Mammary epithelial cell (primary cell): ENCODE measurements at regions of chr4 and their contacts with region 1.

Region 1: GRCh38 chr4:180363815-180364214 is 1879.4 kb upstream of the TENM3 start:
- DNase-seq: peak; percentile 18
- H3K4me3 ChIP-seq: no peak overlapping the region
- H3K27ac ChIP-seq: no peak overlapping the region
- H3K4me1 ChIP-seq: no peaks in the 10 kb centered on the region
- H3K27me3 ChIP-seq: no peaks in the 10 kb centered on the region
- CTCF ChIP-seq: no peak

Region 2: GRCh38 chr4:180350901-180351300 is 12.9 kb before region 1 on chr4:
- CTCF ChIA-PET with region 1: no interaction called
- dilution Hi-C with region 1: no loop called
- in situ Hi-C with region 1: no loop called
- intact Hi-C with region 1: loop called (anchors 1 kb)
- DNase-seq: no peak
- H3K4me3 ChIP-seq: no peak overlapping the region
- H3K27ac ChIP-seq: no peak overlapping the region
- H3K4me1 ChIP-seq: no peaks in the 10 kb centered on the region
- H3K27me3 ChIP-seq: peaks cover 2% of the 10 kb centered on the region
- CTCF ChIP-seq: no peak

Region 3: DNA sequence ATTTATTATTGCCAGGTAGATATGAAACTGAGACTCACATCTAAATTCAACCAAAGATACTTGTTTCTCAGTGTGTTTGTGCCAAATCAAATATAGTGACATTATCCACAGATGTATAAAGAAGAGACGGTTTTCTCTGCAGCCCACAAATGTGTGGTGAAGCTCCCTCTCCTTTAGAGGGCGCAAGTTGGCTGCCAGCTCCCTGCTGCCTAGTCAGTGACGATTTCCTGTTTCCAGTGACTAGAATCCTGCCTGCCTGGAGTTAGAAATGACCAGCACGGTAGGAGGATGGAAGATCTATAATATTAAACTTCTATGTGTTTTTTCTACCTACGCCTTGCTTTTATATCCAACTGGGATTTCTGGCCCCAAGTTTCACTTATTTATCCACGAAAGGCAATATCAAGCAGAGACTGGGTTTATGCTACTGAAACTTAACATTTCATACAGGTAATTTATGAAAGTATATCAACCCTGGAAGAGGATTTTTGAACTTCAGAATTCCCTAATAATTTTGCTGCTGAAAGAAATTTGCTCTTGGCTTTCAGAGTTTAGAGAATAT is 85.7 kb after region 1 on chr4:
- CTCF ChIA-PET with region 1: no interaction called
- dilution Hi-C with region 1: no loop called
- in situ Hi-C with region 1: no loop called
- intact Hi-C with region 1: no loop called
- DNase-seq: peak; percentile 54
- H3K4me3 ChIP-seq: peak overlapping the region; percentile 28 to 52 (median 33)
- H3K27ac ChIP-seq: no peak overlapping the region
- H3K4me1 ChIP-seq: no peaks in the 10 kb centered on the region
- H3K27me3 ChIP-seq: no peaks in the 10 kb centered on the region
- CTCF ChIP-seq: peak; percentile 94 to 97

Region 4: DNA sequence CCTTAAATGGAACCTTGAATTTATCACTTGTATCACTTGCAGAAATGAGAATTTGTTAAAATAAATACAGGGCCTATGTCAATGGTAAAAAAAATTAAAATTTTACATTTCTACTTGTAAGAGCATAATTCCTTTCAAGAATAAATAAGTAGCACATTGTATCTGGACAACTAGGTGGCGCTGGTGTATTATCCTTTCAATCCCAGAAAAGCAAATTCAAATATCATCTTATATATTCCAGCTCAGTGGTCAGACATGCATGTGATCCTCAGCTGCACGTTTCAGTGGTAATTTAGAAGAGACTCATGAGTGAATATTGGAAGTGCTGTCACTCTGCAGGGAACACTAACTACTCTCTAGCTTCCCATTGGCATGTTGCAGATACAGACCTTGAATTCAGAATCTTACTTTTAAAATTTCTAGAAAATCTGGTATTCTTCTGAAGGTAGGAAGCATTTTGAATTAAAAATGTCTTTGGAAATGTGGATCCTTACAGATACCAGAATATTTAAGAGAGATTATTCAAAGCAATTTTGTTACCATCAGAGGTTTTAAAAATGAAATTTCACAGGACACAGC is 464.7 kb after region 1 on chr4:
- CTCF ChIA-PET with region 1: no interaction called
- dilution Hi-C with region 1: no loop called
- in situ Hi-C with region 1: no loop called
- intact Hi-C with region 1: no loop called
- DNase-seq: peak; percentile 52
- H3K4me3 ChIP-seq: peak overlapping the region in 1 of 3 experiments; percentile 18
- H3K27ac ChIP-seq: peak overlapping the region; percentile 68
- H3K4me1 ChIP-seq: peaks cover 16% of the 10 kb centered on the region
- H3K27me3 ChIP-seq: no peaks in the 10 kb centered on the region
- CTCF ChIP-seq: peak; percentile 76 to 79

Region 5: DNA sequence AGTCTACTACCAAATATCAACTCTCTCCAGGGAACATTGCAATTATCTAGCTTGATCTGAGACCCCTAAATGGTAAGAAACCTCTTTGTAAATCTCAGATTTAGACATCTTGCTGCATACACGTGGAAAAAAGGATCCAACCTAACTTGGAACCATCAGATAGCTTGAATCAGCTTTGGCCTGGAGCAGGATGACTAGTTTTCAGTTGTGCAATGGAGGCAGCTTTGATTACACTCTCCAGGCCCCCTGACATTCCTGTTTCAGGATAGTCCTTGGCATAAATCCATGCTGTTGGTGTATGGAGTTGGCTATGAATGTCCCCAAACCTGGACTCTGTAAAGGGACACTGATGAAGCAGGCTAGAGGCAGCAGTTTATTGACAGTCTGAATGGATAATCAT is 817.5 kb after region 1 on chr4:
- CTCF ChIA-PET with region 1: no interaction called
- dilution Hi-C with region 1: no loop called
- in situ Hi-C with region 1: no loop called
- intact Hi-C with region 1: no loop called
- DNase-seq: peak; percentile 34
- H3K4me3 ChIP-seq: no peak overlapping the region
- H3K27ac ChIP-seq: no peak overlapping the region
- H3K4me1 ChIP-seq: peaks cover 30% of the 10 kb centered on the region
- H3K27me3 ChIP-seq: no peaks in the 10 kb centered on the region
- CTCF ChIP-seq: no peak